ENCODE measurements at regions of chr3 and their contacts with region 1.

Region 1: GRCh38 chr3:179071550-179072397 is at the start of gene ZMAT3:
- DNase-seq: peak; percentile 96
- H3K4me3 ChIP-seq: peak within 1 kb of the TSS; percentile 86 to 96
- H3K27ac ChIP-seq: peak within 1 kb of the TSS; percentile 79 to 92
- H3K4me1 ChIP-seq: peaks cover 4 to 16% of the 10 kb centered on the region in 2 experiments; a peak in 2 of 4 replicates
- H3K27me3 ChIP-seq: no peaks in the 10 kb centered on the region
- CTCF ChIP-seq: no peak
- EP300 ChIP-seq: no peak
- RAD21 ChIP-seq: no peak
- polyA plus RNA-seq, gene ZMAT3: 11.9 and 17.8 TPM in 2 replicates

Region 2: GRCh38 chr3:179015551-179016020 is 56.2 kb before region 1 on chr3:
- CTCF ChIA-PET with region 1: interaction called, 15 read pairs
- POLR2A ChIA-PET with region 1: no interaction called
- DNase-seq: peak; percentile 50
- H3K4me3 ChIP-seq: no peak overlapping the region; a peak in 1 of 4 replicates
- H3K27ac ChIP-seq: no peak overlapping the region; a peak in 1 of 4 replicates
- H3K4me1 ChIP-seq: peaks cover 0 to 8% of the 10 kb centered on the region in 2 experiments; a peak in 2 of 4 replicates
- H3K27me3 ChIP-seq: no peaks in the 10 kb centered on the region
- CTCF ChIP-seq: peak; percentile 92
- EP300 ChIP-seq: no peak
- RAD21 ChIP-seq: peak; percentile 89

Region 3: GRCh38 chr3:179083977-179084376 is 12.2 kb after region 1 on chr3:
- CTCF ChIA-PET with region 1: interaction called, 24 read pairs
- POLR2A ChIA-PET with region 1: no interaction called
- DNase-seq: no peak
- H3K4me3 ChIP-seq: no peak overlapping the region
- H3K27ac ChIP-seq: no peak overlapping the region
- H3K4me1 ChIP-seq: no peaks in the 10 kb centered on the region
- H3K27me3 ChIP-seq: no peaks in the 10 kb centered on the region
- CTCF ChIP-seq: no peak
- EP300 ChIP-seq: no peak
- RAD21 ChIP-seq: no peak

Region 4: GRCh38 chr3:179108086-179108485 is 36.3 kb after region 1 on chr3:
- CTCF ChIA-PET with region 1: interaction called, 10 read pairs
- POLR2A ChIA-PET with region 1: no interaction called
- DNase-seq: no peak
- H3K4me3 ChIP-seq: no peak overlapping the region
- H3K27ac ChIP-seq: peak overlapping the region in 1 of 2 experiments; percentile 68; a peak in 2 of 4 replicates
- H3K4me1 ChIP-seq: no peaks in the 10 kb centered on the region; a peak in 1 of 4 replicates
- H3K27me3 ChIP-seq: no peaks in the 10 kb centered on the region
- CTCF ChIP-seq: no peak
- EP300 ChIP-seq: no peak
- RAD21 ChIP-seq: no peak

Region 5: GRCh38 chr3:179309225-179310078 is 237.7 kb after region 1 on chr3:
- CTCF ChIA-PET with region 1: interaction called, 22 read pairs
- POLR2A ChIA-PET with region 1: no interaction called
- DNase-seq: no peak
- H3K4me3 ChIP-seq: no peak overlapping the region
- H3K27ac ChIP-seq: no peak overlapping the region
- H3K4me1 ChIP-seq: peaks cover 0 to 6% of the 10 kb centered on the region in 2 experiments; a peak in 1 of 4 replicates
- H3K27me3 ChIP-seq: no peaks in the 10 kb centered on the region
- CTCF ChIP-seq: no peak
- EP300 ChIP-seq: no peak
- RAD21 ChIP-seq: no peak

Region 6: GRCh38 chr3:179322286-179323196 is 250.8 kb after region 1 on chr3 and contains the start of gene ZNF639:
- CTCF ChIA-PET with region 1: interaction called, 21 read pairs
- POLR2A ChIA-PET with region 1: no interaction called
- DNase-seq: peak; percentile 99
- H3K4me3 ChIP-seq: peak within 1 kb of the TSS; percentile 77 to 97
- H3K27ac ChIP-seq: peak within 1 kb of the TSS; percentile 81 to 89
- H3K4me1 ChIP-seq: peaks cover 0 to 6% of the 10 kb centered on the region in 2 experiments; a peak in 2 of 4 replicates
- H3K27me3 ChIP-seq: no peaks in the 10 kb centered on the region
- CTCF ChIP-seq: peak; percentile 73
- EP300 ChIP-seq: peak in 1 of 2 experiments; percentile 46; a peak in 1 of 4 replicates
- RAD21 ChIP-seq: peak; percentile 46
- polyA plus RNA-seq, gene ZNF639: 9.6 and 11.4 TPM in 2 replicates

Measured in SK-N-SH (cell line).